Ascending aorta (tissue), 2 donors: ENCODE measurements at regions of chr1 and their contacts with region 1.

Region 1: GRCh38 chr1:150186789-150187559 is 37.3 kb downstream of the PLEKHO1 start:
- DNase-seq: no peak
- H3K4me3 ChIP-seq: peak overlapping the region; percentile 9 to 51
- H3K27ac ChIP-seq: peak overlapping the region; percentile 77
- H3K4me1 ChIP-seq: peaks cover 0 to 11% of the 10 kb centered on the region in 2 donors
- H3K27me3 ChIP-seq: no peaks in the 10 kb centered on the region
- CTCF ChIP-seq: peak; percentile 49 to 62 (median 55)

Region 2: DNA sequence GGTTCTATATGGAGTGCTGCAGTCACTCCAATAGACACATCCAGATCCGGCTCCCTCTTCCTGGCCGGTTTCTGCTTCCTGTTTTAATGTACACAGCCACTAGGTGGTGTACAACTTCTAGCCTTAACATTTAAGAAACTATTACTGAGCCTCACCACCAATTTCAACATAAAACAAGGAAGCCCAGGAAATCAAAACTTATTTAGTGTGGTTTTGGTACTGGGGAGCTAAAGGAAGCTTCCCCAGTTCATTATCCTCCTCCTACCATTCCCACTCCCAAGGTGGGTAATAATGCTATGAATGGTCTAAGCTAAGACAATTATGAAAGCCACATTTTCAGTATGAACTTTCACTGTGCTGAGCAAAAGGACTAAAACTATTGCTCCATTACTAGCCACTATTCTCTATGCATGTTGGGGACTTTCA is 224.8 kb before region 1 on chr1:
- intact Hi-C with region 1: loop called (anchors 1 kb)
- DNase-seq: peak in 1 of 2 donors; percentile 79
- H3K4me3 ChIP-seq: no peak overlapping the region
- H3K27ac ChIP-seq: peak overlapping the region; percentile 51 to 65
- H3K4me1 ChIP-seq: peaks cover 0 to 13% of the 10 kb centered on the region in 2 donors
- H3K27me3 ChIP-seq: no peaks in the 10 kb centered on the region
- CTCF ChIP-seq: peak; percentile 70 to 80 (median 75)

Region 3: DNA sequence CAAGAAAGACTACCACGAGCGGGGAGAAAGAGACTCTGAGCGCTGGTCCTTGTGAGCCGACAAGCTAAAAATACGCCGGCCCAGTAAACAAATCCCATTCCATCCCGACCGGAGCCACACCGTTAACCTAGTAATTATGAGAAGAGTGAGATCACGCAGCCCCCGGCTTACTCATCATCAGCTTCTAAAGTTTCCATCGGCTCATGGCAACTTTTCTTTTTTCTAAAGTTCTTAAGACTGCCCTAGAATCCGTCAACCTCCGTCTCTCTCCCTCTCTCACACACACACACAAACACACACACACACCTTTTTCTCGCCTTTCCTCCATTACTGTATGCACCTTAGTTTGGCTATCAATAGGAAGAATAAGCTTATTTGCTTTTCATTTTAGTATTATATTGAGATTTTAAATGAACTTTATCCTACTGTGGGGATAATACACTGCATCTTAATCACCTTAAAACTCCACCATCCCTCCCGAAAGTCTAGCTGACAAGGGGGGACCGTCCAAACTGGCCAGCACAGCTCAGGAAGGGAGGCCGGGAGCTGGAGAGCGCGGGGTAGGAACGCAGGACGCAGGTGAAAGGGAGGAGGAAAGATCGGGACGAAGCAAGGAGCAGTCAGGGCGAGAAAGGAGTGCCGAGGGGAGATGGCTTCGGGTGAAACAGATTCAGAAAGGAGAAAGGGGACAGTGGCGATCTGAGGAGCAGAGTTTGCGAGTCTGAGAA is 177.1 kb before region 1 on chr1:
- intact Hi-C with region 1: no loop called
- DNase-seq: peak; percentile 11 to 79
- H3K4me3 ChIP-seq: peak overlapping the region; percentile 78 to 92
- H3K27ac ChIP-seq: peak overlapping the region; percentile 97 to 99
- H3K4me1 ChIP-seq: peaks cover 12 to 15% of the 10 kb centered on the region in 2 donors
- H3K27me3 ChIP-seq: no peaks in the 10 kb centered on the region
- CTCF ChIP-seq: peak in 1 of 3 experiments; percentile 2

Region 4: DNA sequence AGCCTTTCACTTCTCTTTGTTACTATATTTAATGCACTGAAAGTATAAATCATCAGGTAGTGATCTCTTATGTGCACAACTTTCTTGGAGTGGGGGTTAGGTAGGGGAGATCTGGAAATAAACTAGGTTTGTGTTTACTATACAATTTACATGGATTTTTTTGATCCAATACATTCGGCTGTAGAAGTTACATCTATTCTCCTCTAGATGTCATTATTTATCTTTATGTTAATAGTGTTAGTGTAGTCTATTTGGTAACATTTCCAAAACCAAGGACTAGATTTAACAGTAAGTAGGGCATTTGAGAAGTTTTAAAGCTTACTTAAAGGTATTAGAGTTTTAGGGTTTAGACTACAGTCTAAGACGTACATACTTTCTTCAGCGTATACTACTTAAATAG is 114.0 kb before region 1 on chr1:
- intact Hi-C with region 1: loop called (anchors 1 kb)
- DNase-seq: no peak
- H3K4me3 ChIP-seq: no peak overlapping the region
- H3K27ac ChIP-seq: no peak overlapping the region
- H3K4me1 ChIP-seq: peaks cover 4 to 6% of the 10 kb centered on the region in 2 donors
- H3K27me3 ChIP-seq: no peaks in the 10 kb centered on the region
- CTCF ChIP-seq: peak in 1 of 3 experiments; percentile 54

Region 5: DNA sequence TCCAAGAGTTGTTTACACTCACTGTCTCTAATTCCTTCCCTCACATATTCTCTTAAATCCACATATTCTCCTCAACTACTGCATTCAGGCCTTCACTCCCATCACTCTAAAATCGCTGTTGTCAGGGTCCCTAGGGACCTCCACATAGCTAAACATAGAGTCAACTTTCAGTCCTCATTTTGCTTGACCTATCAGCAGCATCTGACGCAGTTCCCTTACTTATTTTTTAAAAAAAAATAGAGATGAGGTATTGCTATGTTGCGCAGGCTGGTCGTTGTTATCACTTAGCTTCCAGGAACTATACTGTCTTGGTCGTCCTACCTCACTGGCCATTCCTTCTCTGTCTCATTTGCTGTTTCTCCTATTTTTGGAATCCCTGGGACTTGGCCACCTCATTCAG is 48.9 kb before region 1 on chr1:
- intact Hi-C with region 1: no loop called
- DNase-seq: no peak
- H3K4me3 ChIP-seq: no peak overlapping the region
- H3K27ac ChIP-seq: peak overlapping the region in 1 of 2 donors; percentile 13
- H3K4me1 ChIP-seq: no peaks in the 10 kb centered on the region
- H3K27me3 ChIP-seq: no peaks in the 10 kb centered on the region
- CTCF ChIP-seq: no peak

Region 6: DNA sequence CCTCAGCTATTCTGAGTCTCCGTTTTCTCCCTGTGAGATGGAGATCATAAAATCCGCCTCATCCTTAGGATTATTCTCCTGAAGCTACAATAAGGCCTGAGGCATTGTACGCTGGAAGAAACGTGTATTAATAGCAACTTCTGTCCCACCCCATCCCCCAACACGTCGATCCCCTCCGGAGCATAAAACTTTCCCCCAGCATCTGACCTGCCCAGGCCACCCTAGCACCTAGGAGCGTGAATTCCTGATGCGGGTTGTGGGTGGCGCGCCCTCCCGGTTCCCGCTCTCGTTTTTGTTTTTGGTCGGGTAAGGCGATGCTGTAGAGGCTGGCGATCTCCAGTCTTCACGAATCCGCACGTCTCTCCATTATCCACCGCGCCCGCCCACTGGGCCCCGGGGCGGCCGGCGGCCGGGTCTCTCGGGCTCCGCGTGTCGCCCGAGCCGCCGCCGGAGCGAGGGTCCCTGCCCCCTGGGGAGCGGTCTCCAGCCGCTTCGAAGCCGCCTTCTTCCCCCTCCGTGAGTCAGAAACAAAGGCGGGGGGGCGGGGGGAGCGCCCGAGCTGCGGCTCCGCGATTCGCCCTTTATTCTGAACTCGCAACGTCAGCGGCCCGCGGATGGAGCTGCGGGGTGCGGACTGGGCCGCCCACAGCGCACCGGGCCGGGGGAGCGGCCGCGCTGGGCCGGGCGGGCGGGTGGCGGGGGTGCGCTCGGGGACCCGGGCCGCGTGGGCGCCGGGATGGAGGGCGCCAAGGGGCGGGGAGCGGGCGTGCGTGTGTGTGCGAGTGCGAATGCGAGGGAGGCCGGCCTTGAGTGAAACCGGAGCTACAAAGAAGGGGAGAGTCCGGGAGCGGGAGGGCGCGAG is 37.5 kb before region 1 on chr1 and contains the start of gene PLEKHO1:
- intact Hi-C with region 1: loop called (anchors 1 kb)
- DNase-seq: peak; percentile 80 to 96
- H3K4me3 ChIP-seq: peak within 1 kb of the TSS; percentile 94 to 95
- H3K27ac ChIP-seq: peak within 1 kb of the TSS; percentile 96 to 97
- H3K4me1 ChIP-seq: peaks cover 8 to 21% of the 10 kb centered on the region in 2 donors
- H3K27me3 ChIP-seq: no peaks in the 10 kb centered on the region
- CTCF ChIP-seq: no peak
- total RNA-seq, gene PLEKHO1: 88.9 TPM

Region 7: DNA sequence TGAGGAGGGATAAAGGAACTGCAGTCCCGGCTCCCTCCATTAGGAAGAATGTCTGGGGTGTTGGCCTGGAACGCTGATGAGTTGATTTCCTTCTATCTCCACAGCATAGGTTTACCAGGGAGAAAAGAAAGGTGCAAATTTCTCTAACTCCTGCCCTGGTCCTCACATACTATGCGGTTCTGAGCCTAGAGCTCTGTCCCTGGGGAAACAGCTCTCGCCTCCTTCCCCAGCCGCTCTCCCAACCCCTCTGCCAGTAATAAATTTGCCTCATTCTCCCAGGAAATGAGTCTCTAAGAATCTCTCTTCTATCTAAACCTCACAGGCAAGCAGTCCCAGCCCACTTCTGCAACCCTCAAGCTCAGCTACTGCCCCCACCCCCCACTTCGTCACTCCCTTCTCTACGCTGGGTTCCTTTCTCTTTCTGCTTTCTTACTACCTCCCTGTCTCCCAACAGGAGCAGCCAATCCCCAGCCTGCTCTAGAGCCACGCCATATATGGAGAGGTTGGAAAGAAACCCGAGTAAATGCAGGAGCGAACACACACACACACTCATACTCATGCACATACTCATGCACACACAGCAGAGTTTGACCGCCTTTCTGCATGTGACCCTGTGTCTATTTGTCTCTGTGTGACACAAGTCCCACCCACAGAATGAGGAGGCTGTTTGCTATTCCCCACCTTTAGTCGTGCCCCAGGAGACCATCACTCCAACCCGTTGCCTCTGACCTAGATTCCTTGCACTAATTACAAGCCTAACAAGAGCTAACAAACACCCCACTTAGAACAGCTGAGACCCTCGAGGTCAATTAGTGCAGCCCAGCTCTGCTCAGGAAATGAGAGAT is 23.9 kb before region 1 on chr1:
- intact Hi-C with region 1: loop called (anchors 2 kb)
- DNase-seq: peak; percentile 93 to 97
- H3K4me3 ChIP-seq: peak overlapping the region; percentile 39 to 57
- H3K27ac ChIP-seq: peak overlapping the region; percentile 94 to 98
- H3K4me1 ChIP-seq: peaks cover 18 to 29% of the 10 kb centered on the region in 2 donors
- H3K27me3 ChIP-seq: no peaks in the 10 kb centered on the region
- CTCF ChIP-seq: no peak